Activated CD4-positive, alpha-beta T cell treated with anti-CD3 and anti-CD28 coated beads, Interleukin-2, amount 10 ng/mL, durations not matched to agents 24 days and 14 days (primary cell): ENCODE measurements at regions of chr18 and their contacts with region 1.

Region 1: DNA sequence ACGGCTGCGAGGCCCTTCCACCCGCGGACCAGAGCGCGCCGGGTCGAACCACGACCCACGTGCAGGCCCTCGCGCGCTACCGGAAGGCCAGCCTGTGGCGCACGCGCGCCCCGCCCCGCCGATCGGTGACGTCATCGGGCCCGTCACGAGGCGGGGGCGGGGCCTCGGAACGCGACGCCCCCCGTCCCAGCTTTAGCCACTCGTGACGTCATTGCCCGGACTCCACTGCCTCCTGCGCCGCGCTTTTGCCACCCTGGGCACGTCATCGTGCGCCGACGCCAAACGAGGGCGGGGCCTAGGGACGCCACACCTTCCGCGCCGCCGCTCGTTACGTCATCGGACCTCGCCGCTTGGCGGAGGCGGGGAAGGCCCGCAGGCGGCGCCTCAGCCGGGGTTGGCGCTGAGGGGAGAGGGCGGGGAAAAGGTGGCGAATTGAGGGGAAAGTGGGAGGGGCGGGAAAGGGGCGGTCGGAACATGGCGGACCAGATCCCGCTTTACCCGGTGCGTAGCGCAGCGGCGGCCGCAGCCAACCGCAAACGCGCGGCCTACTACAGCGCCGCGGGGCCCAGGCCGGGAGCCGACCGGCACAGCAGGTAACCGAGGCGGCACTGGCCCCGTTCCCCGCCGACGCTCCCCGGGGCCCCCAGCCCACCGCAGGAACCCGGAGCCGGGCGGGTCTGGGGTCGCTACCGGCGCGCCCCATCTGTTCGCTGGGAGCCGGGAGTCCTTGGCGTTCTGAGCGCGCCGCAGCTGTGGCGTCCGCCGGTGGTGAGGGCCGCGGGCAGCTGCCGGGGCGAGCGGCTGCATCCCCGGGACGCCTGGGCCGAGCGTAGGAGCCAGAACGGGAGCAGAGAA is at the start of gene ATP9B:
- DNase-seq: peak; percentile 100
- H3K4me3 Mint-ChIP-seq: peak within 1 kb of the TSS; percentile 89
- H3K27ac Mint-ChIP-seq: peak within 1 kb of the TSS; percentile 99
- H3K4me1 Mint-ChIP-seq: peaks cover 27% of the 10 kb centered on the region
- H3K27me3 Mint-ChIP-seq: peaks cover 19% of the 10 kb centered on the region
- total RNA-seq, gene ATP9B: 23.8 and 30.3 TPM in 2 replicates

Region 2: GRCh38 chr18:79111483-79111882 is 42.3 kb after region 1 on chr18:
- intact Hi-C with region 1: no loop called
- DNase-seq: no peak
- H3K4me3 Mint-ChIP-seq: no peak overlapping the region
- H3K27ac Mint-ChIP-seq: no peak overlapping the region
- H3K4me1 Mint-ChIP-seq: peaks cover 3% of the 10 kb centered on the region
- H3K27me3 Mint-ChIP-seq: no peaks in the 10 kb centered on the region

Region 3: DNA sequence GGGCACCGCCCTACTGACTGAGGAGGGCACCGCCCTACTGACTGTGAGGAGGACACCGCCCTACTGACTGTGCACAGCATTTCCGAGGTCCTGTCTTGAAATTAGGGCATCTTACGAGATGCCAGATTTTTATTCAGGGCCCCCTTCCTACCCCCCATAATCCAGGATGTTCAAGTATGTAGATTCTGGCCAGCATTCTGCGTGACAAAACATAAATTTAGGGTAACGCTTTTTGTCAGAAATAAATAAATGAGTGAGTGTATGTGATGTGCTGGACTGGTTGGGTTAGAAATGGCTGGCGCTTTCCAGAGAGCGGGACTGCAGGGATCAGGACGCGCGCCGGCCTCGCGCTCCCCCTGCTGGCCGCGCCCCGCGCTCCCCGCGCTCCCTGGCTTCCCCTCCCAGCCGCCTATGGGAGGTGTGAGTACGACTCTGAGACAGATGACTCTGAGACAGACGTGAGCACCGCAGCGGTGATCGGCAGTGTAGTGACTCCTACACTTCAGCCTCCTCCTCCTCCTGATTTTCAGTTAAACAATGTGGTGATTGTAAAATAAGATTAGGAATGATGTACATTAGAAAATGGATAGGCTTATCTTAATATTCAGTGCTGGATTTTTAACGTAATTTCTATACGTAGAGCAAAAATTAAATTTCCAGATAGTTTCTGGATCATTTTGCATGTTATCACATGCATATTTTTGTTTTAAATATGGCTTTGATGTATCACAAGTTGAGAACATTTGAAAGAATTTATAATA is 177.4 kb after region 1 on chr18:
- intact Hi-C with region 1: loop called (anchors 2 kb)
- DNase-seq: peak; percentile 90
- H3K4me3 Mint-ChIP-seq: peak overlapping the region; percentile 37
- H3K27ac Mint-ChIP-seq: peak overlapping the region; percentile 60
- H3K4me1 Mint-ChIP-seq: peaks cover 7% of the 10 kb centered on the region
- H3K27me3 Mint-ChIP-seq: peaks cover 2% of the 10 kb centered on the region

Region 4: GRCh38 chr18:79302120-79302519 is 233.0 kb after region 1 on chr18:
- intact Hi-C with region 1: no loop called
- DNase-seq: no peak
- H3K4me3 Mint-ChIP-seq: no peak overlapping the region
- H3K27ac Mint-ChIP-seq: no peak overlapping the region
- H3K4me1 Mint-ChIP-seq: no peaks in the 10 kb centered on the region
- H3K27me3 Mint-ChIP-seq: no peaks in the 10 kb centered on the region

Region 5: DNA sequence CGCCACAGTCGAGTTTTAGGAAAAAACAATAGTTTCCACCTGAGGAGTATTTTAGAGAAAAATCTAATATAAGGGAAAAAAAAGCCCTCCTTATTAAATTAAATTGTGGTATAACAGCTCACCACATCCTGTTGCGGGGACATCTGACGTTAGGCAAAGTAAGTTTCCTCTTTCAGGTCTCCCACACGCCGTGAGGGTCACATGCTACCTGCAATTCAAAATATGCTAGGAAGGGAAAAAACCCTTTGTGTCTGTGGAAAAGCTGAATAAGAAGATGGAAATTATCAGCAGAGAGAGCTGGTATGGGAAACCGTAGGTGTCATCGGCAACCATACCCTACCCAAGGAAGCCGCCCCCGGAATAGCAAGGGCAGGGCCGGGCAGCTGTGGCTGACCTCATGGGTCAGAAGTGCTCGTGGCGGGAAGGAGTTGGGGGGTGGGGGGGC is 454.6 kb after region 1 on chr18:
- intact Hi-C with region 1: loop called (anchors 5 kb)
- DNase-seq: peak; percentile 91
- H3K4me3 Mint-ChIP-seq: peak overlapping the region; percentile 76
- H3K27ac Mint-ChIP-seq: peak overlapping the region; percentile 92
- H3K4me1 Mint-ChIP-seq: peaks cover 54% of the 10 kb centered on the region
- H3K27me3 Mint-ChIP-seq: no peaks in the 10 kb centered on the region

Region 6: GRCh38 chr18:80034068-80034851 is 965.1 kb after region 1 on chr18 and contains the start of gene RBFA:
- intact Hi-C with region 1: loop called (anchors 1 kb)
- DNase-seq: peak; percentile 99
- H3K4me3 Mint-ChIP-seq: peak within 1 kb of the TSS; percentile 94
- H3K27ac Mint-ChIP-seq: peak within 1 kb of the TSS; percentile 97
- H3K4me1 Mint-ChIP-seq: peaks cover 30% of the 10 kb centered on the region
- H3K27me3 Mint-ChIP-seq: peaks cover 4% of the 10 kb centered on the region
- total RNA-seq, gene RBFA: 46.0 and 49.9 TPM in 2 replicates